ENCODE measurements at regions of chr17 and their contacts with region 1.

Region 1: DNA sequence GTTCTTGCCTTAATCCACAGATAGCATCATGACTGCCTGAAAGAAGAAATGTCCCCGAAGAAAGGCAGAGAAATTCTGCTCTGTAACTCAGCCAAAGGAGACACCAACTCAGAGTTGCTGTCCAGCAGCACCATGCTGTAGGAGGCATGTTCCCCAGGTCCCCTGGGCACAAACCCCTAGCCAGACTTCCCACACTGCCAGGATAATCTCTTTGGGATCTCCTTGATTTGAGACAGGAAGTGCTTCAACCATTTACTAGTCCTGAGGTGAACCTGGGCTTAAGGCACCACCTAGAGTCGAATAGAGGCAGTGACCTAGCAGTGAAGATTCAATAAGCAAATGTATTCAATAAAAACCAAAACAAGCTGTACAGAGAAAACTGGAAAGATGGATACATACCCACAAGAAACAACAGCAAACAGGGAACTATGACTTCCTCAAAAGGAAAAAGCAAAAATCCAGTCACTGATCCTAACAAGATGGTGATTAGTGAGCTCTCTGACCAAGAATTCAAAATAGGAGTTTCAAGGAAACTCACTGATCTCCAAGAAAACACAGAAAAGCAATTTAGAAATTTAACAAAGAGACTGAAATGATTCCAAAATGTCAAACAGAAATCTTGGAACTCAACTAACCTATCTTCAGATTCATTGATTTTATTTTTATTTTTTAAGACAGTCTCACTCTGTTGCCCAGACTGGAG is 5.7 kb downstream of the OR4D2 start:
- DNase-seq: peak; percentile 38
- H3K4me3 Mint-ChIP-seq: no peak overlapping the region
- H3K27ac Mint-ChIP-seq: no peak overlapping the region
- H3K4me1 Mint-ChIP-seq: peaks cover 33% of the 10 kb centered on the region
- H3K27me3 Mint-ChIP-seq: peaks cover 6% of the 10 kb centered on the region

Region 2: GRCh38 chr17:57892146-57892828 is 280.2 kb before region 1 on chr17:
- intact Hi-C with region 1: loop called (anchors 10 kb)
- DNase-seq: peak; percentile 68
- H3K4me3 Mint-ChIP-seq: no peak overlapping the region
- H3K27ac Mint-ChIP-seq: no peak overlapping the region
- H3K4me1 Mint-ChIP-seq: no peaks in the 10 kb centered on the region
- H3K27me3 Mint-ChIP-seq: peaks cover 12% of the 10 kb centered on the region

Region 3: GRCh38 chr17:58121925-58122324 is 50.6 kb before region 1 on chr17:
- intact Hi-C with region 1: loop called (anchors 1 kb)
- DNase-seq: peak; percentile 29
- H3K4me3 Mint-ChIP-seq: no peak overlapping the region
- H3K27ac Mint-ChIP-seq: no peak overlapping the region
- H3K4me1 Mint-ChIP-seq: no peaks in the 10 kb centered on the region
- H3K27me3 Mint-ChIP-seq: peaks cover 13% of the 10 kb centered on the region

Measured in activated T-helper 1 cell treated with anti-CD3 and anti-CD28 coated beads, Interleukin-12 subunit alpha, Interleukin-12 subunit beta, Interleukin-2, Interleukin-4 antibody, amounts not matched to agents 30 ng/mL and 10 ng/mL and 1 ng/mL, durations not matched to agents 14 hours and 24 hours and 36 hours (primary cell).